Natural killer cell (primary cell): ENCODE measurements at regions of chr4 and their contacts with region 1.

Region 1: DNA sequence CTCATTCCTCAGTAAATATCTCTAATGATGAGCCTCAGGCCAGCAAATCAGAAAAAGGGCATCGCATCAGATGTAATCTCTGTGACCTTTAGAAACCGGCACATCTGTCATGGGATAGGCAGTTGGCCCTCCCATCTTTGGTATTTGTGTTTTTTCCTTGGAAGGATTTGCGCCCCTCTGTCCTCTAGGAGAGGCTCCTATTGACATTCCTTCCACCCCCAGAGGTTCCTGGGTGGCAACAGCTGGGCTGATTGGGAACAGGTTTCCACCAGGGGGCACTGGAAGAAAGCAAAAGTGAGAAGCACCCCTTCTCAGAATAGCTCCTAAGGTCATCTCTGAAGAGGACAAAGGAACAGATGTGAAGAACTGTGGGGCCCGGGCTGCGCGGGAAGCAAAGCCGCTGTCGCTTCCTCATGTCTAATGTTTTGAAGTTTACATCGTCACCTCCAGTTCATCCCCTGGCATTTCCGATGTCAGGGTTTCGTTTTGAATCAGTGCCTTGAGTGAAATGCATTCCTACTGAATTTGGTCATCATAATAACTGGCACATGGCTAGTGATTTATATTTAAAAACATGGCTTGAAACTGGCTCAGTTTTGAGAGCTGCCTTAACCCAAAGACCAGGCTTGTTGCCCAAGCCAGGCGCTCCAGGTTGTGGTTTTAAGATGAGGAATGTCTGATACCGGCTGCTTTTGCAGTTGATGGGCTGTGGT is 6.2 kb downstream of the TXK start:
- DNase-seq: peak; percentile 55 to 82
- ATAC-seq: peak; percentile 47 to 70 (median 50)
- H3K4me3 ChIP-seq: peak overlapping the region; percentile 9
- H3K4me3 Mint-ChIP-seq: peak overlapping the region; percentile 97
- H3K27ac ChIP-seq: peak overlapping the region; percentile 97
- H3K27ac Mint-ChIP-seq: peak overlapping the region in 1 of 2 donors; percentile 91
- H3K4me1 ChIP-seq: peaks cover 73% of the 10 kb centered on the region
- H3K4me1 Mint-ChIP-seq: peaks cover 90 to 91% of the 10 kb centered on the region in 2 donors
- H3K27me3 ChIP-seq: no peaks in the 10 kb centered on the region
- H3K27me3 Mint-ChIP-seq: no peaks in the 10 kb centered on the region
- CTCF ChIP-seq: peak; percentile 48

Region 2: GRCh38 chr4:47914220-47914925 is 213.5 kb before region 1 on chr4 and contains the start of gene NFXL1:
- intact Hi-C with region 1: loop called (anchors 10 kb)
- DNase-seq: peak; percentile 88 to 97
- ATAC-seq: peak; percentile 96 to 99 (median 97)
- H3K4me3 ChIP-seq: peak within 1 kb of the TSS; percentile 85
- H3K4me3 Mint-ChIP-seq: peak within 1 kb of the TSS; percentile 97
- H3K27ac ChIP-seq: peak within 1 kb of the TSS; percentile 65
- H3K27ac Mint-ChIP-seq: peak within 1 kb of the TSS; percentile 74 to 88
- H3K4me1 ChIP-seq: peaks cover 7% of the 10 kb centered on the region
- H3K4me1 Mint-ChIP-seq: peaks cover 23 to 26% of the 10 kb centered on the region in 2 donors
- H3K27me3 ChIP-seq: no peaks in the 10 kb centered on the region
- H3K27me3 Mint-ChIP-seq: peaks cover 0 to 3% of the 10 kb centered on the region in 2 donors
- CTCF ChIP-seq: no peak
- total RNA-seq, gene NFXL1: 6.5 to 11.4 (median 9.9) TPM

Region 3: GRCh38 chr4:47926639-47927258 is 201.1 kb before region 1 on chr4:
- intact Hi-C with region 1: no loop called
- DNase-seq: peak; percentile 28 to 71
- ATAC-seq: peak; percentile 88 to 99 (median 98)
- H3K4me3 ChIP-seq: no peak overlapping the region
- H3K4me3 Mint-ChIP-seq: no peak overlapping the region
- H3K27ac ChIP-seq: no peak overlapping the region
- H3K27ac Mint-ChIP-seq: no peak overlapping the region
- H3K4me1 ChIP-seq: peaks cover 6% of the 10 kb centered on the region
- H3K4me1 Mint-ChIP-seq: peaks cover 6% of the 10 kb centered on the region in 2 donors
- H3K27me3 ChIP-seq: peaks cover 2% of the 10 kb centered on the region
- H3K27me3 Mint-ChIP-seq: peaks cover 32 to 53% of the 10 kb centered on the region in 2 donors
- CTCF ChIP-seq: peak; percentile 79

Region 4: DNA sequence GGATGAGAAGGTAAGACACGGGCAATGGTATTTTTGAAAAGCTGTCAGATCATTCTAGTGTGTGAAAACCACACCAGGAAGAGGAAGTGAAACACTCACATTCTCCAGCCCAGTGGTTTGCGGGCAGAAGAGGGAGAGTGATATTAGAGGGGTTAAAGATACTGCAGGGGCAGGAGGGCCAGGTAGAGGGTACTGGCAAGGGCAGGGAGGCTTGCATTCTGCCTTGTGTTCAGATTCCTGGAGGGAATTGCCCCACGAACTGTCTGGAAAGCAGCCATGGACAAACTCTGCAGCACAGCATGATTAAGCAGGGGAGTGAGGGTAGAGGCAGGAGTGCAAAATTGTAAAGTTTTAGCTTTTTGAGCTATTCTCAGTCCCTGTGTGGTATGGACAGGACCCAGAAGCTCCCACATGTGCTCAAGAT is 80.4 kb before region 1 on chr4:
- intact Hi-C with region 1: loop called (anchors 5 kb)
- DNase-seq: peak; percentile 67 to 74
- ATAC-seq: peak; percentile 82 to 93 (median 85)
- H3K4me3 ChIP-seq: no peak overlapping the region
- H3K4me3 Mint-ChIP-seq: peak overlapping the region; percentile 93
- H3K27ac ChIP-seq: no peak overlapping the region
- H3K27ac Mint-ChIP-seq: peak overlapping the region; percentile 71 to 82
- H3K4me1 ChIP-seq: peaks cover 50% of the 10 kb centered on the region
- H3K4me1 Mint-ChIP-seq: peaks cover 58 to 63% of the 10 kb centered on the region in 2 donors
- H3K27me3 ChIP-seq: peaks cover 3% of the 10 kb centered on the region
- H3K27me3 Mint-ChIP-seq: peaks cover 51 to 73% of the 10 kb centered on the region in 2 donors
- CTCF ChIP-seq: no peak

Region 5: GRCh38 chr4:48103483-48104139 is 24.2 kb before region 1 on chr4:
- intact Hi-C with region 1: no loop called
- DNase-seq: no peak
- ATAC-seq: no peak
- H3K4me3 ChIP-seq: no peak overlapping the region
- H3K4me3 Mint-ChIP-seq: peak overlapping the region; percentile 25
- H3K27ac ChIP-seq: peak overlapping the region; percentile 45
- H3K27ac Mint-ChIP-seq: peak overlapping the region; percentile 88 to 90
- H3K4me1 ChIP-seq: peaks cover 14% of the 10 kb centered on the region
- H3K4me1 Mint-ChIP-seq: peaks cover 52 to 56% of the 10 kb centered on the region in 2 donors
- H3K27me3 ChIP-seq: no peaks in the 10 kb centered on the region
- H3K27me3 Mint-ChIP-seq: no peaks in the 10 kb centered on the region
- CTCF ChIP-seq: no peak

Region 6: DNA sequence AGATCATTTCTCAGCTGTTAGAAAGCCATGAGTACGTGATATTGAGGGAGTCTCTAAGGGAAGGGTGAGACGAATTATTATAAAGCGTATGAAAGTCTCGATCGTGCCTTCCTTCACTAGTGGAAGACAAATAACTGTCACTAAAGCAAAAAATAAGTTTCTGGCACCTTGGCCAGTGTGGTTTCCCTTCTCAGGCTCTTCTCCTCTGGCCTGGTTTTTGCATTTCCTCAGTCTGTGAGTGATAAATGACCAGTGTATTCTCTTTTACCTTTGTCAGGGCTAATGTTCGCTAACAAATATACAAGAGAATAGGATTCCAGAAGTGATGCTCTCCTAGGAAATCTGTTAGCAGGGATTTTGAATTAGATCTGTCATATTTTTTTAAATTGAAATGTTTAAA is 13.4 kb before region 1 on chr4:
- intact Hi-C with region 1: loop called (anchors 1 kb)
- DNase-seq: no peak
- ATAC-seq: peak; percentile 63 to 78 (median 71)
- H3K4me3 ChIP-seq: peak overlapping the region; percentile 78
- H3K4me3 Mint-ChIP-seq: peak overlapping the region; percentile 100
- H3K27ac ChIP-seq: peak overlapping the region; percentile 74
- H3K27ac Mint-ChIP-seq: peak overlapping the region; percentile 98 to 99
- H3K4me1 ChIP-seq: peaks cover 28% of the 10 kb centered on the region
- H3K4me1 Mint-ChIP-seq: peaks cover 84 to 93% of the 10 kb centered on the region in 2 donors
- H3K27me3 ChIP-seq: no peaks in the 10 kb centered on the region
- H3K27me3 Mint-ChIP-seq: no peaks in the 10 kb centered on the region
- CTCF ChIP-seq: no peak

Region 7: GRCh38 chr4:48141048-48141447 is 13.2 kb after region 1 on chr4:
- intact Hi-C with region 1: loop called (anchors 1 kb)
- DNase-seq: peak in 1 of 2 donors; percentile 77
- ATAC-seq: peak; percentile 75 to 79 (median 75)
- H3K4me3 ChIP-seq: no peak overlapping the region
- H3K4me3 Mint-ChIP-seq: no peak overlapping the region
- H3K27ac ChIP-seq: no peak overlapping the region
- H3K27ac Mint-ChIP-seq: peak overlapping the region in 1 of 2 donors; percentile 91
- H3K4me1 ChIP-seq: peaks cover 41% of the 10 kb centered on the region
- H3K4me1 Mint-ChIP-seq: peaks cover 46 to 50% of the 10 kb centered on the region in 2 donors
- H3K27me3 ChIP-seq: no peaks in the 10 kb centered on the region
- H3K27me3 Mint-ChIP-seq: no peaks in the 10 kb centered on the region
- CTCF ChIP-seq: peak; percentile 71

Region 8: GRCh38 chr4:48269861-48270522 is 142.2 kb after region 1 on chr4:
- intact Hi-C with region 1: loop called (anchors 10 kb)
- DNase-seq: peak; percentile 83 to 87
- ATAC-seq: peak; percentile 86 to 96 (median 90)
- H3K4me3 ChIP-seq: peak overlapping the region; percentile 61
- H3K4me3 Mint-ChIP-seq: peak overlapping the region; percentile 97
- H3K27ac ChIP-seq: peak overlapping the region; percentile 94
- H3K27ac Mint-ChIP-seq: peak overlapping the region; percentile 84 to 91
- H3K4me1 ChIP-seq: peaks cover 14% of the 10 kb centered on the region
- H3K4me1 Mint-ChIP-seq: peaks cover 17 to 20% of the 10 kb centered on the region in 2 donors
- H3K27me3 ChIP-seq: no peaks in the 10 kb centered on the region
- H3K27me3 Mint-ChIP-seq: no peaks in the 10 kb centered on the region
- CTCF ChIP-seq: no peak

Region 9: GRCh38 chr4:48340965-48341775 is 213.3 kb after region 1 on chr4 and contains the start of gene SLAIN2:
- intact Hi-C with region 1: loop called (anchors 5 kb)
- DNase-seq: peak; percentile 98 to 100
- ATAC-seq: peak; percentile 82 to 93 (median 87)
- H3K4me3 ChIP-seq: peak within 1 kb of the TSS; percentile 98
- H3K4me3 Mint-ChIP-seq: peak within 1 kb of the TSS; percentile 95
- H3K27ac ChIP-seq: peak within 1 kb of the TSS; percentile 98
- H3K27ac Mint-ChIP-seq: peak within 1 kb of the TSS; percentile 93 to 98
- H3K4me1 ChIP-seq: peaks cover 12% of the 10 kb centered on the region
- H3K4me1 Mint-ChIP-seq: peaks cover 45 to 51% of the 10 kb centered on the region in 2 donors
- H3K27me3 ChIP-seq: no peaks in the 10 kb centered on the region
- H3K27me3 Mint-ChIP-seq: no peaks in the 10 kb centered on the region
- CTCF ChIP-seq: peak; percentile 43
- total RNA-seq, gene SLAIN2: 76.9 to 103 (median 98.5) TPM